SK-N-SH (cell line): ENCODE measurements at regions of chr14 and their contacts with region 1.

Region 1: GRCh38 chr14:106837870-106838269 is 1311.5 kb downstream of the TMEM121 start:
- DNase-seq: no peak
- H3K4me3 ChIP-seq: no peak overlapping the region
- H3K27ac ChIP-seq: no peak overlapping the region
- H3K4me1 ChIP-seq: peaks cover 0 to 6% of the 10 kb centered on the region in 2 experiments; a peak in 2 of 4 replicates
- H3K27me3 ChIP-seq: 0 out of 2 replicates have a peak, but pooled peaks cover 5% of the 10 kb centered on the region
- CTCF ChIP-seq: no peak
- EP300 ChIP-seq: no peak
- RAD21 ChIP-seq: no peak

Region 2: GRCh38 chr14:106872611-106873446 is 35.0 kb after region 1 on chr14:
- CTCF ChIA-PET with region 1: interaction called, 11 read pairs
- POLR2A ChIA-PET with region 1: no interaction called
- DNase-seq: peak; percentile 66
- H3K4me3 ChIP-seq: no peak overlapping the region
- H3K27ac ChIP-seq: no peak overlapping the region
- H3K4me1 ChIP-seq: peaks cover 0 to 2% of the 10 kb centered on the region in 2 experiments; a peak in 1 of 4 replicates
- H3K27me3 ChIP-seq: peaks cover 19% of the 10 kb centered on the region
- CTCF ChIP-seq: peak; percentile 65
- EP300 ChIP-seq: no peak
- RAD21 ChIP-seq: peak; percentile 39; the same call in 1 of the 2 replicates